ENCODE measurements at regions of chr2 and their contacts with region 1.

Region 1: DNA sequence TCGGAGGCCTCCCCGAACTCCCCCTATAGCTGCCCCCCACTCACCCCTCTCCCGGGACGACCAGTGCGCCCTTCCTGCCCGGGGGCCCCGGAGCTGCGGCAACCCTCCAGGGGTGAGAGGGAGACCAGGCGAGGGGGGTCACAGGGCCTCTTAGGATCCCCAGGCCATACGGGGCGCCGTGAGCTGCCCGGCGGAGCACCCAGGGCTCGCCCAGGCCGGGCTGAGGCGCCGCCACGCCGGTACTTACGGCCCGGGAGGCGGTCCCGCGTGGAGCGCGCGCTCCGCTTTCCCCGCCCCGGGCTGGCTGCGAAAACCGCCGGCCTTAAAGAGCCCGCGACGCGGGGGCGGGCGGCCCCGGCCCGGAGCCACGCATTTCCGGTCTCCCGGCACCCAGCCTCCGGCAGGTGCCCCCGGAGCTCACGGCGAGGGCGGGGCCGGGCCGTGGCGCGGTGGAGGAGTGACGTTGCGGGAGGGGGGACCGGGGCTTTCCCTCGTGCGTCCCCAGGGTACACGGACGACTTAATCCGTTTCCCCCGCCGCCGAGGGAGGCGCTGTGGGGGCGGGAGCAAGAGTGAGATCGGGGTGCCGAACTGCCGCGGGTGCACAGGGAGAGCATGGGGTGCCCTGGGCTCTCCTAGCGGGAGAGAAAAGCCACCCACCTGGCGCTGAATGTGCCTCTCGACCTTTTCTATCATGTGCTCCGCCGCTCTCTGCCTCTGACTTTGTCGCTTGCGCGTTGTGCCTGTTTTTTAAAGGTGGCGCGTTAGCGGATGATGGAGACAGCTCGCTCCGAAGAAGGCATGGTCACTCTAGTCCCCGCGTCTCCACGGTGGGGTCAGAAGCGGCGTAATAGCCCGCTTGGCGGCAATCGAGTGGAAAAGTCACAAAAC is at the start of gene METTL21A:
- DNase-seq: peak; percentile 94
- H3K4me3 Mint-ChIP-seq: peak within 1 kb of the TSS; percentile 92
- H3K27ac Mint-ChIP-seq: peak within 1 kb of the TSS; percentile 95
- H3K4me1 Mint-ChIP-seq: peaks cover 44% of the 10 kb centered on the region
- H3K27me3 Mint-ChIP-seq: peaks cover 2% of the 10 kb centered on the region
- total RNA-seq, gene METTL21A: 13.6 to 15.7 TPM

Region 2: DNA sequence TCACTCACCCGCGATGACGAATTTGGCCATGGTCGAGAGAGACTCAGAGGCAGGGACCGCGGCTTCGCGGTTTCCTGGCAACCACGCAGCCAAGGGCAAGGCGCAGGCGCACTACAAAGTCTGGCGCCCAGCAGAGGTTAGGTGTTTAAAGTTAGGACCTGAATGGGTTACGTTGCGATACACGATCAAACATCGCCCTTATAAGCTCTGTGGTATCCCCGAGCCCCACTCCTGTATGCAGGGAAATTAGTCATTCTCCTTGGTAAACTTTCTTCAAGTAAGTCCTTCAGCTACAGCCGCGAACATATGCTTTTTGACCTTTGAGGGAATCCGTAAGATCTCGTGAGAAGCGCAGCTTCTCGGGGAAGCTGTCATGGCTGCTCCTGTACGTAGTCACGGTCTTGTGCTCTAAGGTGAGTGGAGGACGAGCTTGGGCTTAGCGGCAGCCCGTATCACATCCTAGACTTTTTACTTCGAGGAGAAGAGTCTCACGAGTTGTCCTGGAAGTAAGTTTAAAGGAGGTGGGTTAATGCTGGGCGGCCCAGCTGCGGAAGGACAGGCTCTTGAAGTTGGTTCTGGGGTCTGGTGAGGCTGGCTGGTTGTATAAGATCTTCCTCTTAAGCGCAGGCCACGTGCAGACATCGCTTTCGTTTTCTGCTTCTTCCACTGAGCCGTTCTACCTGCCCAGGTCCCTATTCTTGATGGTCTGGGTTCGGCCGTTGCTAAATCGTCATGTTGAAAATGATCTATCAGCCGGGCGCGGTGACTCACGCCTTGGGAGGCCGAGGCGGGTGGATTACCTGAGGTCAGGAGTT is 859.8 kb before region 1 on chr2 and contains the starts of genes FASTKD2 and MDH1B:
- CTCF ChIA-PET with region 1: interaction called, 3 read pairs
- POLR2A ChIA-PET with region 1: interaction called, 16 read pairs
- DNase-seq: peak; percentile 88
- H3K4me3 Mint-ChIP-seq: peak within 1 kb of the TSS; percentile 88
- H3K27ac Mint-ChIP-seq: peak within 1 kb of the TSS; percentile 89
- H3K4me1 Mint-ChIP-seq: peaks cover 34% of the 10 kb centered on the region
- H3K27me3 Mint-ChIP-seq: peaks cover 3% of the 10 kb centered on the region
- total RNA-seq, gene FASTKD2: 15.4 to 15.7 TPM
- total RNA-seq, gene MDH1B: 0.08 to 0.15 TPM

Region 3: GRCh38 chr2:207643892-207644291 is 18.6 kb after region 1 on chr2:
- CTCF ChIA-PET with region 1: no interaction called
- POLR2A ChIA-PET with region 1: no interaction called
- DNase-seq: no peak
- H3K4me3 Mint-ChIP-seq: no peak overlapping the region
- H3K27ac Mint-ChIP-seq: no peak overlapping the region
- H3K4me1 Mint-ChIP-seq: no peaks in the 10 kb centered on the region
- H3K27me3 Mint-ChIP-seq: peaks cover 4% of the 10 kb centered on the region

Region 4: GRCh38 chr2:207710814-207711740 is 85.8 kb after region 1 on chr2 and contains the start of gene CCNYL1:
- CTCF ChIA-PET with region 1: interaction called, 13 read pairs
- POLR2A ChIA-PET with region 1: interaction called, 47 read pairs
- DNase-seq: peak; percentile 99
- H3K4me3 Mint-ChIP-seq: peak within 1 kb of the TSS; percentile 94
- H3K27ac Mint-ChIP-seq: peak within 1 kb of the TSS; percentile 74
- H3K4me1 Mint-ChIP-seq: peaks cover 27% of the 10 kb centered on the region
- H3K27me3 Mint-ChIP-seq: peaks cover 1% of the 10 kb centered on the region
- total RNA-seq, gene CCNYL1: 6.1 TPM

Region 5: GRCh38 chr2:208040199-208041171 is 415.2 kb after region 1 on chr2:
- CTCF ChIA-PET with region 1: interaction called, 18 read pairs
- POLR2A ChIA-PET with region 1: interaction called, 5 read pairs
- DNase-seq: peak; percentile 77
- H3K4me3 Mint-ChIP-seq: no peak overlapping the region
- H3K27ac Mint-ChIP-seq: no peak overlapping the region
- H3K4me1 Mint-ChIP-seq: no peaks in the 10 kb centered on the region
- H3K27me3 Mint-ChIP-seq: peaks cover 10% of the 10 kb centered on the region

Measured in activated CD4-positive, alpha-beta memory T cell treated with anti-CD3 and anti-CD28 coated beads, Interleukin-2, amount 10 ng/mL, durations not matched to agents 7 days and 5 days (primary cell).